ENCODE measurements at regions of chr9 and their contacts with region 1.

Region 1: DNA sequence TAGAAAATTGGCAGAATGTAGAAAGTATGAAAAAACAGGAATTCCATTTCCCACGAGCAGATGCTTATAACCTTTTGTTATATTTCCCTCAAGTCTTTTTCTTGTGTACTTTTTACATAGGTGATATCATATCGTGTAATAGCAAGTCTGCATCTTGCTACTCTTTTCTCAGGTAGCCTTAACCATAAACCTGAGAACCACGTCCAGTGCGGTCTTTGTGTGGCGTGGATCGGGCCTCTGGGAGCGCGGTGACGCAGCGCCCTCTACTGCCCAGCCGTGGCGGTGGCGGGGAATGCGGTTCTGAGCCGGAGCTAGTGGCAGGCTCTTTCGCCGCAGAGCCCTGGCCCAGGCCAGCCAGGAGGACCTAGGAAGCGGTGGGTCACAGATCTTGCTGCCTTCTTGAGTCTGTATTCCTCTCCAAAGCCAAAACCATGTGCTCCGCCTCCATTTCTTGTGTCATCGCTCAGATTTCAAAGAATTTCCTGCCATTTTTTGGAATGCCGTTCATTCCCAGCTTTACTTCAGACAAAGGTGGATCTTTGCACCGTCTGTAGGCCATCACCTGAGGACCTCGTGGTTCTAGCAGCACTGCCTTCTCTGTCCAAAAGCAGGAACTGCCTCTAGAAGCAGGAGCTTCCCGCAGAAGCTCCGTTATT is 71.9 kb downstream of the MVB12B start:
- DNase-seq: peak; percentile 82
- ATAC-seq: peak; percentile 25
- H3K4me3 Mint-ChIP-seq: no peak overlapping the region
- H3K27ac Mint-ChIP-seq: peak overlapping the region; percentile 84
- H3K4me1 Mint-ChIP-seq: peaks cover 84% of the 10 kb centered on the region
- H3K27me3 Mint-ChIP-seq: no peaks in the 10 kb centered on the region

Region 2: GRCh38 chr9:126301985-126302603 is 96.4 kb before region 1 on chr9:
- CTCF ChIA-PET with region 1: interaction called, 107 read pairs
- DNase-seq: peak; percentile 81
- ATAC-seq: peak; percentile 93
- H3K4me3 Mint-ChIP-seq: no peak overlapping the region
- H3K27ac Mint-ChIP-seq: peak overlapping the region; percentile 16
- H3K4me1 Mint-ChIP-seq: peaks cover 18% of the 10 kb centered on the region
- H3K27me3 Mint-ChIP-seq: peaks cover 4% of the 10 kb centered on the region

Region 3: GRCh38 chr9:126317513-126317912 is 81.0 kb before region 1 on chr9:
- CTCF ChIA-PET with region 1: interaction called, 106 read pairs
- DNase-seq: peak; percentile 59
- ATAC-seq: no peak
- H3K4me3 Mint-ChIP-seq: no peak overlapping the region
- H3K27ac Mint-ChIP-seq: no peak overlapping the region
- H3K4me1 Mint-ChIP-seq: peaks cover 34% of the 10 kb centered on the region
- H3K27me3 Mint-ChIP-seq: no peaks in the 10 kb centered on the region

Region 4: DNA sequence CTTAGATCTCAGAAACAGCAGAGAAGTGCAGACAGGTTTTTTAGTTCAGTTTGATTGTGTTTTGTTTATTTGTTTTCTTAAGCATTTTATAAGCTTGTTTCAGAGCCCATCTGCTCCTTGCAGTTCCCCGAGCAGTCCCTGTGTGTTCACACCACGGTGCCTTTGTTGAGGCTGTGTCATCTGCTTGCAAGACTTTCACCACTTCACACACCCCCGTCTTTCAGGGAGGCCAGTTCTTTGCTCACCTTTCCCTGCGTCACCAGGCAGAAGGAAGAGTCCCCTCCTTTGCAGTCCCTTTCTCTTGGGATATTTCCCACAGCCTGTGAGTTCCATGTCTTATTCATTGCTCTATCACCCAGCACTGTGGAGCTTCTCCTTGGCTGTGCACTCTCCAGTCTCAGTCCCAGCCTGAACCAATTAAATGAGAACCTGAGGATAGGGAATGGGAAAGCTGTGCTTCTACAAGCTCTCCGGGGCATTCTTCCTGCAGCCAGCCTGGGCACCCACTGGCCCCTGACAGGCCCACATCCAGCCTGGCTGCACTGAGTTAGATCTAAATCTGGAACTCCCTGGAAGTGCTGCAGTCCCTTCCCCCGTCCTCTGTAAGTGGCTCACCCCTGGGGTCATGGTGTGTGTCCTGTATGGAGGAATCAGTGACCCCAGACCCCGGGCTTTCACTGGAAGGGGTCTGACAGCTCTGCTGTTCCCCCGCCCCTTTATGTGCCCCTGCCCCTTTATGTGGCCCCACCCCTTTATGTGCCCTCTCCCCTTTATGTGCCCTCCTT is 66.4 kb before region 1 on chr9:
- CTCF ChIA-PET with region 1: interaction called, 74 read pairs
- DNase-seq: no peak
- ATAC-seq: no peak
- H3K4me3 Mint-ChIP-seq: no peak overlapping the region
- H3K27ac Mint-ChIP-seq: peak overlapping the region; percentile 21
- H3K4me1 Mint-ChIP-seq: peaks cover 62% of the 10 kb centered on the region
- H3K27me3 Mint-ChIP-seq: no peaks in the 10 kb centered on the region

Region 5: DNA sequence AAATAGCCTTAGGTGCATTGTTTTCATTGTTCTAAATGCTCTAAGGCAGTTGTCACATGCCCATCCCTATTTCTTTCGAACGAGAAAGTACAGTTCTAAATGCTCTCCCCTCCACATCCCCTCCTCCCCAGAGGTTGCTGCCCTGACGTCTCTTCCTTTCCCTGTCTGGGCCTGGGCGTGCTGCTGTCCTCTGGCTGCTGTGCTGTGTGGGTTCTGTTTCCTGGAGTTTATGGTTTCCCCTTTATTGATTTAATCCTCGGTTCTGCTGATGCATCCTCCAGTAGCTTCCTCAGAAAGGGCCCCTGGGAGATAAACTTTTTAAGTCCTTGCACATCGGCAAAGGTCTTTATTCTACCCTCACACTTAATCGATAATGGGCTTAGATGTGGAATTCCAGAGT is 23.1 kb before region 1 on chr9:
- CTCF ChIA-PET with region 1: no interaction called
- DNase-seq: no peak
- ATAC-seq: peak; percentile 42
- H3K4me3 Mint-ChIP-seq: no peak overlapping the region
- H3K27ac Mint-ChIP-seq: peak overlapping the region; percentile 7
- H3K4me1 Mint-ChIP-seq: peaks cover 47% of the 10 kb centered on the region
- H3K27me3 Mint-ChIP-seq: no peaks in the 10 kb centered on the region

Region 6: GRCh38 chr9:126411225-126411947 is 12.9 kb after region 1 on chr9:
- CTCF ChIA-PET with region 1: interaction called, 41 read pairs
- DNase-seq: peak; percentile 80
- ATAC-seq: peak; percentile 85
- H3K4me3 Mint-ChIP-seq: peak overlapping the region; percentile 65
- H3K27ac Mint-ChIP-seq: peak overlapping the region; percentile 96
- H3K4me1 Mint-ChIP-seq: peaks cover 47% of the 10 kb centered on the region
- H3K27me3 Mint-ChIP-seq: no peaks in the 10 kb centered on the region

Region 7: DNA sequence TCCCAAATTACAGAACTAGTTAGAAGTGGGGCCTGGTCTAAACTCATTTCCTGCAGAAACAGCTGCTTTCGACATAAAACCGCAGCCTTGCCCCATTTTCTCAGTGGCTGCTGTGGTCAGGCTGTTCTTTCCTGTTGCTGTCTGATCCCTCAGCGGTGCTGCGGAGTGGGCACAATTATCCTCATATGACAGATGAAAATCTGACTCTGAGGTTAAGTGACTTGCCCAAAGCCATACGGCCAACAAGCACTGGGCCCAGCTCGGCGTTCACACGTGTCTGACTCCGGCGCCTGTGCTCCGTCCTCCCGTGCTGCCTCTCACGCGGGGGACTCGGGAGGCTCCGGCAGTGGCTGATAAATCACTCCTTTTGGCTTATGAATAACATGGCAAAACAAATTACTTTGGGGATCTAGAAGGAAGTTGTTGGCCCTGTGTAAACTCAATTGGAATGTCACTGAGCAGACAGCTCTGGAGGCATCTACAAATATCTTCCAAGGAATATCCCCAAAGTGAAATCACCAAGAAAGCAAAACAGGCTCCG is 72.6 kb after region 1 on chr9:
- CTCF ChIA-PET with region 1: interaction called, 30 read pairs
- DNase-seq: peak; percentile 96
- ATAC-seq: peak; percentile 80
- H3K4me3 Mint-ChIP-seq: peak overlapping the region; percentile 33
- H3K27ac Mint-ChIP-seq: peak overlapping the region; percentile 92
- H3K4me1 Mint-ChIP-seq: peaks cover 68% of the 10 kb centered on the region
- H3K27me3 Mint-ChIP-seq: peaks cover 3% of the 10 kb centered on the region

Region 8: DNA sequence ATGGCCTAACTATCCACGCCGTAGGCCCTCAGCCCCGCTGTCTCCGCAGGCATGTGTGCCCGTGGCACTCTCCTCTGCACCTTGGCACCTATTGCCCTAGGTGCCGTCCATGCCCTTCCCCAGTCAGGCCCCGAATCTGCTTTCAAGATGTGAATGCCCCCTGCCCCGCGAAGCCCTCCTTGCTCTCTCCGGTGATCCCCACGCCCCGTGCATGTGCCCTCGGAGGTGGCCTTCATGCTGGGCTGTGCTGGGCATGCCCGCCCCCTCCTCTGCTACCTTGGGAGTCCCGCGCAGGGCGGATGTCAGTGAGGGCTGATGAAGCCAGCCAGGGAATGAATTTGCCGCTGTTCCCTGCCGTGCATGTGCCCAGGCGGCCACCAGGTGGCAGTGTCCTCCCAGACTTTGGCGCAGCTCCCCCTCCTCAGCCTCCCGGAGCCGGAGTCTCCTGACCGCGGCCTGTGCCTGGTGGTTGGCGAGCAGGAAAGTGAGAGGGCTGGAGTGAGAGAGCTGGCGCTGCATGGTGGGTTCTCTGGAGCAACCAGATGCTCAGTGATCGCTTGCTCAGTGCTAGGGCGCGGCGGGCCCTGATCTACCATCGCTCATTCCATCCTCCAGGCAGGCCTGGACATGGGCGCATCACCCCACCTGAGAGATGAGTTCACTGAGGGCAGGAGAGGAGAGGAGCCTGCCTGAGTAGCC is 102.3 kb after region 1 on chr9:
- CTCF ChIA-PET with region 1: interaction called, 18 read pairs
- DNase-seq: peak; percentile 69
- ATAC-seq: peak; percentile 55
- H3K4me3 Mint-ChIP-seq: no peak overlapping the region
- H3K27ac Mint-ChIP-seq: no peak overlapping the region
- H3K4me1 Mint-ChIP-seq: peaks cover 9% of the 10 kb centered on the region
- H3K27me3 Mint-ChIP-seq: peaks cover 3% of the 10 kb centered on the region